AG04449 (cell line): ENCODE measurements at regions of chr12 and their contacts with region 1.

Region 1: DNA sequence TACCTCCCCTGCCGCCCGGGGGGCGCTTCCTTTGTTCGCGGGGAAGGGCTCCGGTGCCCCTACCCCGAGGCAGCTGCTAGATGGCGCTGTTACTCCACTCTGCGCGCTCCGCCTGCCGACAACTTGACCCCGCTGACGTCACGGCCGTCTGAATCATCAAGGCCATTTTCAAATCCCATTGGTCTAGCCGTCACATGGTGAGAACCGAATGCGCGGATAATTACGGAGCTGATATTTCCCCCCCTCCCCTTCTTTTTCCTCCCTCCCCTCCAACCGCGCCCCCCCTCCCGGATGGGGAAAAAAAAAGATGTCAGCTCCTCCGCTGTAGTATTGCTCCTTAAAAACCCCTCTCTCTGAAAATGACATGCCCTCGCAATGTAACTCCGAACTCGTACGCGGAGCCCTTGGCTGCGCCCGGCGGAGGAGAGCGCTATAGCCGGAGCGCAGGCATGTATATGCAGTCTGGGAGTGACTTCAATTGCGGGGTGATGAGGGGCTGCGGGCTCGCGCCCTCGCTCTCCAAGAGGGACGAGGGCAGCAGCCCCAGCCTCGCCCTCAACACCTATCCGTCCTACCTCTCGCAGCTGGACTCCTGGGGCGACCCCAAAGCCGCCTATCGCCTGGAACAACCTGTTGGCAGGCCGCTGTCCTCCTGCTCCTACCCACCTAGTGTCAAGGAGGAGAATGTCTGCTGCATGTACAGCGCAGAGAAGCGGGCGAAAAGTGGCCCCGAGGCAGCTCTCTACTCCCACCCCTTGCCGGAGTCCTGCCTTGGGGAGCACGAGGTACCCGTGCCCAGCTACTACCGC is at the start of gene HOXC10:
- DNase-seq: peak; percentile 89
- H3K4me3 ChIP-seq: peak within 1 kb of the TSS; percentile 96
- CTCF ChIP-seq: peak; percentile 92

Region 2: GRCh38 chr12:53974084-53975063 is 10.7 kb before region 1 on chr12 and contains the start of gene HOTAIR:
- CTCF ChIA-PET with region 1: interaction called, 12 read pairs
- POLR2A ChIA-PET with region 1: interaction called, 4 read pairs
- DNase-seq: no peak
- H3K4me3 ChIP-seq: peak within 1 kb of the TSS; percentile 76
- CTCF ChIP-seq: no peak

Region 3: GRCh38 chr12:54012631-54013409 is 27.7 kb after region 1 on chr12:
- CTCF ChIA-PET with region 1: interaction called, 249 read pairs
- POLR2A ChIA-PET with region 1: interaction called, 22 read pairs
- DNase-seq: no peak
- H3K4me3 ChIP-seq: peak overlapping the region; percentile 46
- CTCF ChIP-seq: peak; percentile 25

Region 4: DNA sequence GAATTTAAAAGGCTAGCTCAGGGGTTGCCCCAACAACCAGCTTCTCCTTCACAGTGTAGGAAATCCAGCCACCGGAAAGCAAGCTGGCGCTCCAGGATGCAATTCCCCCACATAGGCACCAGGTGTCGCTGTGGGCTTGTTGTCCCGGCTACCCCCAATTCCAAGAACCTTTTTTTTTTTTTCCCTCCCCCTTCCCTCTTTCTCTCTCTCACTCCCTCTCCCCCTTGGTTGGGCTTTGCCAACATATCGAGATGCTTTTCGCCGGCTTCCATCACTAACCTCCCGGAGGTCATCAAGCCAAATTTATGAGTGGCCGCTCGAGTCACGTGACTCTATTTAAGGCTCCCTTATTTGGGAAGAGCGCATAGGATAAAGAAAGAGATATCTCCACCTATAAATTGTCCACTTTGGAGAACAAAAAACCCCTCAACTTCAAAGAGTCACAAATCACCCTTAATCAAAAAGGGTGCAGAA is 47.6 kb after region 1 on chr12 and contains the start of gene HOXC5:
- CTCF ChIA-PET with region 1: interaction called, 34 read pairs
- POLR2A ChIA-PET with region 1: interaction called, 3 read pairs
- DNase-seq: no peak
- H3K4me3 ChIP-seq: peak within 1 kb of the TSS; percentile 49
- CTCF ChIP-seq: peak; percentile 86

Region 5: GRCh38 chr12:54207484-54208294 is 222.6 kb after region 1 on chr12:
- CTCF ChIA-PET with region 1: interaction called, 401 read pairs
- POLR2A ChIA-PET with region 1: interaction called, 6 read pairs
- DNase-seq: no peak
- H3K4me3 ChIP-seq: no peak overlapping the region
- CTCF ChIP-seq: peak; percentile 99